Aorta (tissue), 5 donors: ENCODE measurements at regions of chr12 and their contacts with region 1.

Region 1: GRCh38 chr12:23350808-23351207 is 598.7 kb downstream of the SOX5 start:
- DNase-seq: no peak
- ATAC-seq: no peak
- H3K4me3 ChIP-seq: no peak overlapping the region
- H3K27ac ChIP-seq: no peak overlapping the region
- H3K4me1 ChIP-seq: peaks cover 1 to 7% of the 10 kb centered on the region in 2 donors
- H3K27me3 ChIP-seq: no peaks in the 10 kb centered on the region

Region 2: DNA sequence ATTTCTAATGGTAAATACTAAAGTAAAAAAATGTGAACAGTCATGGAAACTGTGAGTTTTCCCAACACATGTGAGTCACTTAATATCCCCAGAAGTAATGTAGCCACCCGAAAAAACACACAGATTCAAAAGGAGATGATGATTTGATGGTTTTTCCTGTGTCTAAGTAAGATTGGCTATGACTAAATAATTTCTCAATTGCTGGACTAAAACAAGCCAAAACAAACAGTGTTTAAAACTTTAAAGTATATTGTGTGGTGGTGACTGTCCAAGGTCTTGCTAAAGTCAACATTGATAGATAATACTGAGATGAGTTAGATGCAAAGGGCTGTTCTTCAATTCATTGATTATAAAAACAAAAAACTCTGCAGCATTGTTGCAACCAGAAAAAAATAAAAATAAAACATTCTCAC is 688.3 kb after region 1 on chr12:
- intact Hi-C with region 1: loop called in 1 of 2 experiments (anchors 10 kb)
- DNase-seq: no peak
- ATAC-seq: no peak
- H3K4me3 ChIP-seq: no peak overlapping the region
- H3K27ac ChIP-seq: no peak overlapping the region
- H3K4me1 ChIP-seq: peaks cover 2 to 7% of the 10 kb centered on the region in 2 donors
- H3K27me3 ChIP-seq: no peaks in the 10 kb centered on the region